Gastrocnemius medialis (tissue), 4 donors: ENCODE measurements at regions of chr9 and their contacts with region 1.

Region 1: GRCh38 chr9:113807173-113808061 is 68.7 kb upstream of the ZNF618 start:
- DNase-seq: peak in 1 of 2 donors; percentile 28
- ATAC-seq: peak; percentile 56 to 88
- H3K4me3 ChIP-seq: peak overlapping the region; percentile 6 to 54 (median 16)
- H3K27ac ChIP-seq: no peak overlapping the region
- H3K4me1 ChIP-seq: peaks cover 0 to 4% of the 10 kb centered on the region in 2 donors
- H3K27me3 ChIP-seq: no peaks in the 10 kb centered on the region
- CTCF ChIP-seq: peak; percentile 76 to 91 (median 84)
- POLR2A ChIP-seq: no peak

Region 2: GRCh38 chr9:113828221-113828620 is 20.8 kb after region 1 on chr9:
- in situ Hi-C with region 1: no loop called
- intact Hi-C with region 1: no loop called
- DNase-seq: no peak
- ATAC-seq: no peak
- H3K4me3 ChIP-seq: no peak overlapping the region
- H3K27ac ChIP-seq: no peak overlapping the region
- H3K4me1 ChIP-seq: no peaks in the 10 kb centered on the region
- H3K27me3 ChIP-seq: no peaks in the 10 kb centered on the region
- CTCF ChIP-seq: no peak
- POLR2A ChIP-seq: no peak

Region 3: GRCh38 chr9:113876151-113876992 is 69.0 kb after region 1 on chr9 and contains the start of gene ZNF618:
- in situ Hi-C with region 1: no loop called
- intact Hi-C with region 1: loop called (anchors 5 kb)
- DNase-seq: no peak
- ATAC-seq: peak; percentile 51 to 75
- H3K4me3 ChIP-seq: peak within 1 kb of the TSS; percentile 86 to 95 (median 94)
- H3K27ac ChIP-seq: peak within 1 kb of the TSS; percentile 58 to 67 (median 64)
- H3K4me1 ChIP-seq: peaks cover 9% of the 10 kb centered on the region in 2 donors
- H3K27me3 ChIP-seq: no peaks in the 10 kb centered on the region
- CTCF ChIP-seq: peak in 2 of 5 experiments; percentile 56 to 62
- POLR2A ChIP-seq: no peak
- total RNA-seq, gene ZNF618: 0.26 to 1.2 (median 1.0) TPM

Region 4: GRCh38 chr9:113963017-113963620 is 155.7 kb after region 1 on chr9:
- in situ Hi-C with region 1: loop called in 3 of 4 experiments (anchors 10 kb)
- intact Hi-C with region 1: loop called (anchors 2 kb)
- DNase-seq: peak in 1 of 2 donors; percentile 32
- ATAC-seq: peak; percentile 49 to 56
- H3K4me3 ChIP-seq: no peak overlapping the region
- H3K27ac ChIP-seq: no peak overlapping the region
- H3K4me1 ChIP-seq: peaks cover 0 to 10% of the 10 kb centered on the region in 2 donors
- H3K27me3 ChIP-seq: no peaks in the 10 kb centered on the region
- CTCF ChIP-seq: peak; percentile 54 to 79 (median 64)
- POLR2A ChIP-seq: no peak

Region 5: DNA sequence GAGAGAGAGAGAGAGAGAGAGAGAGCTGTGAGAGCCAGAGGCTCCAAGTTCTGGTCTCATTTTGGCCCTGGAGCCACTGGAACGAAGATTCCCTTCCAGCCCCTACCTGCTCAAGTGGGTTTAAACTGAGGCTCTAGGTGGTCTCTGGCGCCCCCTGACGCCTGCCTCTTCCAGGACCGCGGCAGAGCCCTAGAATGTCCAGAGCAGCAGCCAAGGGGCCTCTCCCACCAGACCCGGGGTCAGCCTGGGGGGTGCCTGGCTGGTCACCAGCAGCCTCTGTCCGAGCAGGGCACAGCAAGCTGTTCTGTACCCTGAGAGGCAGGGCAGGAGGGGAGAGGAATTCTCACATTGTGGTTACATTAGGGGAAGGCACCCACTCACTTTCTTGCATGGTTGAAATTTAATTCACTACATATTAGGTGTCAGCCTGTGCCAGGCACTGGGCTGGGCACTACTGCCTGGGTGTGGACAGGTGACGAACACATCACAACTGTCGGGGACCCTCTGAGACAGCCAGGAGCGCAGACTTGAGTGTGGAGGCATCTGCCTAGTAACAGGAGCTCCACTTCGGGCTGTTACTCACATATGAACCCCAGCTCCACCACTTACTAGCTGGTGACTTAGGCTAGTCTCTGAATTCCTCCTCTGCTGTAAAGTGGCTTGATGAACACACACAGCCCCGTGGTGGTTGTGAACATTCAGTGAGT is 226.1 kb after region 1 on chr9:
- in situ Hi-C with region 1: loop called in 3 of 4 experiments (anchors 10 to 25 kb)
- intact Hi-C with region 1: loop called (anchors 5 kb)
- DNase-seq: no peak
- ATAC-seq: no peak
- H3K4me3 ChIP-seq: no peak overlapping the region
- H3K27ac ChIP-seq: no peak overlapping the region
- H3K4me1 ChIP-seq: no peaks in the 10 kb centered on the region
- H3K27me3 ChIP-seq: no peaks in the 10 kb centered on the region
- CTCF ChIP-seq: peak; percentile 26 to 65 (median 60)
- POLR2A ChIP-seq: no peak

Region 6: DNA sequence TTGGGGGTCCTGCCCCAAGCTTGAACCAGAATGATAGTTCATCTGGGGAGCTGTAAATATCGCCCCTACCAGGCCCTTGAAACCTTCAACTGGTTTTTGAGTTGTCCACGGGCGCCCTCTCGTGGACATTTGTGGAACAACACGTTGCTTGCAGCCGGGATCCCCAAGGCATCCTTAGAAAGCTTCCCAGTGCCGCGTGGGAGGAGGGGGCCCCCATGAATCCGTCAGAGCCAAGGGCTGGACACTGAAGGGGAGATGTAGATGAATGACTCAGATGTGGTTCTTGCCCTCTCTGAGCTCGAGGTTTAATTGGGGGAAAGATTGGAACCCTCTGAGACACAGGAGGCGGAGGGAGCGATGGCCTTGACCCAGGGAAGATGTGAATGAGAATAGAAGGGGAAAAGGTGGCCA is 483.7 kb after region 1 on chr9:
- in situ Hi-C with region 1: loop called in 2 of 4 experiments (anchors 25 kb)
- intact Hi-C with region 1: no loop called
- DNase-seq: peak; percentile 31 to 56
- ATAC-seq: peak; percentile 69 to 75
- H3K4me3 ChIP-seq: no peak overlapping the region
- H3K27ac ChIP-seq: no peak overlapping the region
- H3K4me1 ChIP-seq: no peaks in the 10 kb centered on the region
- H3K27me3 ChIP-seq: no peaks in the 10 kb centered on the region
- CTCF ChIP-seq: peak; percentile 84 to 96 (median 93)
- POLR2A ChIP-seq: no peak